Common myeloid progenitor, CD34-positive (primary cell): ENCODE measurements at regions of chr11 and their contacts with region 1.

Region 1: GRCh38 chr11:32792948-32793475 is 1.4 kb downstream of the CCDC73 start:
- DNase-seq: peak; percentile 53 to 70 (median 61)
- H3K4me3 ChIP-seq: peak overlapping the region in 5 of 7 experiments; percentile 20 to 68 (median 51)
- H3K27ac ChIP-seq: no peak overlapping the region
- H3K4me1 ChIP-seq: peaks cover 0 to 5% (median 0%) of the 10 kb centered on the region in 4 experiments
- H3K27me3 ChIP-seq: no peaks in the 10 kb centered on the region

Region 2: GRCh38 chr11:32571039-32571438 is 222.0 kb before region 1 on chr11:
- CTCF ChIA-PET with region 1: no interaction called
- POLR2A ChIA-PET with region 1: no interaction called
- DNase-seq: no peak
- H3K4me3 ChIP-seq: no peak overlapping the region
- H3K27ac ChIP-seq: no peak overlapping the region
- H3K4me1 ChIP-seq: peaks cover 0 to 2% (median 0%) of the 10 kb centered on the region in 4 experiments
- H3K27me3 ChIP-seq: no peaks in the 10 kb centered on the region

Region 3: GRCh38 chr11:32713496-32713895 is 79.5 kb before region 1 on chr11:
- CTCF ChIA-PET with region 1: interaction called, 16 read pairs
- POLR2A ChIA-PET with region 1: no interaction called
- DNase-seq: peak; percentile 18 to 49 (median 41)
- H3K4me3 ChIP-seq: no peak overlapping the region
- H3K27ac ChIP-seq: no peak overlapping the region
- H3K4me1 ChIP-seq: no peaks in the 10 kb centered on the region
- H3K27me3 ChIP-seq: no peaks in the 10 kb centered on the region

Region 4: GRCh38 chr11:32809313-32809712 is 16.3 kb after region 1 on chr11:
- CTCF ChIA-PET with region 1: interaction called, 11 read pairs
- POLR2A ChIA-PET with region 1: no interaction called
- DNase-seq: peak; percentile 65 to 84 (median 77)
- H3K4me3 ChIP-seq: no peak overlapping the region
- H3K27ac ChIP-seq: no peak overlapping the region
- H3K4me1 ChIP-seq: no peaks in the 10 kb centered on the region
- H3K27me3 ChIP-seq: no peaks in the 10 kb centered on the region